Heart left ventricle (tissue), 16 donors: ENCODE measurements at regions of chr12 and their contacts with region 1.

Region 1: GRCh38 chr12:67364228-67364627 is 95.1 kb downstream of the CAND1 start:
- DNase-seq: no peak
- ATAC-seq: no peak
- H3K4me3 ChIP-seq: no peak overlapping the region
- H3K27ac ChIP-seq: peak overlapping the region in 1 of 12 donors; percentile 34
- H3K4me1 ChIP-seq: peaks cover 0 to 20% (median 0%) of the 10 kb centered on the region in 12 donors
- H3K27me3 ChIP-seq: no peaks in the 10 kb centered on the region
- CTCF ChIP-seq: no peak
- POLR2A ChIP-seq: no peak

Region 2: GRCh38 chr12:67006610-67007009 is 357.6 kb before region 1 on chr12:
- intact Hi-C with region 1: no loop called
- DNase-seq: no peak
- ATAC-seq: no peak
- H3K4me3 ChIP-seq: no peak overlapping the region
- H3K27ac ChIP-seq: no peak overlapping the region
- H3K4me1 ChIP-seq: no peaks in the 10 kb centered on the region
- H3K27me3 ChIP-seq: no peaks in the 10 kb centered on the region
- CTCF ChIP-seq: no peak
- POLR2A ChIP-seq: no peak

Region 3: DNA sequence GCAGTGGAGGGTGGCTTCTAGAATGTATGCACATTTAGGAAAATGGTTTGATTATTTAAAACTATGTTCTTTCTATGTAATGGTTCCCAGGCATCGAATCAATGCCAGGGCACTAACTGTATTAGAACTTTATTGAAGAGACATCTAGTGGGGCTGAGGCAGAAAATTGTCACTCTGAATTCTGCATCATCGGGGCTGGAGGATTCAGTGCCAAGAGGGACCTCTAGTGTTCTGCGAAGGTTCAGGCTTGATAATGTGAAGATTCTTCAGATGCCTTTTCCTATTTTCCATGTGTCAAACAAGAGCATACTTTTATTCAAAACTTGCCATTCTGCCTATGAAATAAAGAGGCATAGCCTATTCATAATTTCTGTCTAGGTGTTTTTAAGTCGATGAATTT is 51.2 kb after region 1 on chr12:
- intact Hi-C with region 1: loop called in 6 of 10 experiments (anchors 5 to 10 kb)
- DNase-seq: peak in 1 of 5 donors; percentile 26
- ATAC-seq: peak in 3 of 4 donors; percentile 50 to 75 (median 62)
- H3K4me3 ChIP-seq: no peak overlapping the region
- H3K27ac ChIP-seq: no peak overlapping the region
- H3K4me1 ChIP-seq: peaks cover 0 to 16% (median 5%) of the 10 kb centered on the region in 12 donors
- H3K27me3 ChIP-seq: no peaks in the 10 kb centered on the region
- CTCF ChIP-seq: peak in 11 of 12 donors; percentile 15 to 69 (median 44)
- POLR2A ChIP-seq: no peak